Head of caudate nucleus (tissue), 42 donors: ENCODE measurements at regions of chr7 and their contacts with region 1.

Region 1: GRCh38 chr7:76011442-76011861 is 17.1 kb upstream of the TMEM120A start:
- DNase-seq: no peak

Region 2: GRCh38 chr7:75866489-75867389 is 144.7 kb before region 1 on chr7:
- intact Hi-C with region 1: loop called (anchors 5 kb)
- DNase-seq: peak in 41 of 42 donors; percentile 23 to 85 (median 64)